Cardiac septum (tissue), 1 donor: ENCODE measurements at regions of chr9 and their contacts with region 1.

Region 1: GRCh38 chr9:130940693-130941576 is 1.9 kb upstream of the FIBCD1 start:
- DNase-seq: peak; percentile 82

Region 2: DNA sequence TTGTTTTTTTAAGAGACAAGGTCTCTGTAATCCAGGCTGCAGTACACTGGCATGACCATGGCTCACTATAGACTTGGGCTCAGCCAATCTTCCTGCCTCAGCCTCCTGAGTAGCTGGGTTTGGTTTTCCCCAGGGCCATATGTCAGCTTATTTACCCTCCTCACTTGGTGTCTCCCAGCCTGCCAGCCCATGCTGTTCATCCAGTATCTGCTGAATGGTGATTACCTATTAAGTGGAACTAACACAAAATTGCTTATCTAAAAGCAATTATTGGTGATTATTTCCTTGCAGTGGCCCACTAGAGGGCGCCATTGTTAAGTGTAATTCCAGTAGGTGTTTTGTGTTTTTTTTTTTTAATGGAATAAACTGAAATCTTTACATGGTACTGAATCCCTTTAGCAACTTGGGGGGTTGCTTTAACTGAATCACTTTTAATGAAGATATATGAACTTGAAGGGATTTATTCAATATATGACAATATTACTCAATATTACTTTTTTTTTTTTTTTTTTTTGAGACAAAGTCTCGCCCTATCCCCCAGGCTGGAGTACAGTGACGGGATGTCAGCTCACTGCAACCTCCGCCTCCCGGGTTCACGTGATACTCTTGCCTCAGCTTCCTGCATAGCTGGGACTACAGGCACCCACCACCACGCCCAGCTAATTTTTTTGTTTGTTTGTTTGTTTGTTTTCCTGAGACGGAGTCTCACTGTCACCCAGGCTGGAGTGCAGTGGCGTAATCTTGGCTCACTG is 233.5 kb before region 1 on chr9:
- intact Hi-C with region 1: loop called (anchors 2 kb)
- DNase-seq: no peak

Region 3: DNA sequence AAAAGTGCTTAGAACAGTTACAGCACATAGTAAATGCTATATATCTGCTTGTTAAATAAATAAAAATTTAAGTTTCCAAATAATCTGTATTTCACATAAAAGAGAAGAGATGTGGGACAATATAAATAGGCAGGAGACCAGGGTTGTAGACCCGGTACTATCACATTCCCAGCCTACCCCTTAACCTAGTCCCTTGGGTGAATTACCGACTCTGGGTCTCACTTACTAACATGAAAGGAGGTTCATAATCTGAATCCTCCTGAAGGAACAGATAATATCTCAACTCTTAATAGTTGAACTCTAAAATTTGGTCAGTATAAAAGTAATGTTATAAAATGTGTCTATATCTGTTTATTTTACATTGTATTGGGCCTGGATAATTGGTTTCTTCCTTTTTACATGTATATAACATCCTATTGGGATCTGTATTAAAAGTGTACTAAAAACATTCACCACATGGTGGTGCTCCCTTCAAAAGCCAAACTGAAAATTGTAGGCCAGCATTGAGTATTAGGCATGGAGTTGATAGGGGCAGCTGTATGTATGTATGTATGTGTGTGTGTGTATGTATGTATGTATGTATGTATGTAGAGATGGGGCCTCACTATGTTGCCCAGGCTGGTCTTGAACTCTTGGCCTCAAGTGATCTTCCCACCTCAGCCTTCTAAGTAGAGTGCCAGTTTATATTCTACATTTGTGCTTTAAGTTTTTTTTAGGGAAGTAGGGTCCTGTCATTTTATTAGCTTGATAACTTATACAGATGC is 170.1 kb before region 1 on chr9:
- intact Hi-C with region 1: loop called (anchors 5 kb)
- DNase-seq: no peak

Region 4: DNA sequence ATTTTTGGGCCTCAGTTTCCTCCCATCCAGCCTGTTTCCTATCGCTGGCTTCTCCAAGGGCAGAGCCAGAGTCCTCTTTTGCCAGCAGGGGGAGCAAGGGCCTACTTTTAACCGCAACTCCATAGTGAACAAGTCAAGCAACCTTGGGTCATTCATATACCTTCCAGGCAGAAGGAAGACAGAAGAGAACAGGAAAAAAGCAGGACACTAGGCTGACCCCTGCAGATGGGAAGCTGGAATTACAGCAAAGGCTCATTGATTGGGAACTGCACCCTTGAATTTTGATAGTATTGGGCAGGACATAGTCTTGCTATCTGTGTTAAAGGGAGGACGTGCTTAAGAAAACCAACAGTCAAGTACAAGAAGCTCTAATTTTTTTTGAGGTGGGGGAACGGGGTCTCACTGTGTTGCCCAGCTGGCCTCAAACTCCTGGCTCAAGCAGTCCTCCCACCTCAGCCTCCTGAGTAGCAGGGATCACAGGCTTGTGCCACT is 74.4 kb before region 1 on chr9:
- intact Hi-C with region 1: loop called (anchors 2 kb)
- DNase-seq: no peak

Region 5: GRCh38 chr9:130997925-130998596 is 57.1 kb after region 1 on chr9:
- intact Hi-C with region 1: loop called (anchors 2 kb)
- DNase-seq: no peak

Region 6: GRCh38 chr9:131046581-131047202 is 105.8 kb after region 1 on chr9:
- intact Hi-C with region 1: no loop called
- DNase-seq: no peak